ENCODE measurements at regions of chr22 and their contacts with region 1.

Region 1: DNA sequence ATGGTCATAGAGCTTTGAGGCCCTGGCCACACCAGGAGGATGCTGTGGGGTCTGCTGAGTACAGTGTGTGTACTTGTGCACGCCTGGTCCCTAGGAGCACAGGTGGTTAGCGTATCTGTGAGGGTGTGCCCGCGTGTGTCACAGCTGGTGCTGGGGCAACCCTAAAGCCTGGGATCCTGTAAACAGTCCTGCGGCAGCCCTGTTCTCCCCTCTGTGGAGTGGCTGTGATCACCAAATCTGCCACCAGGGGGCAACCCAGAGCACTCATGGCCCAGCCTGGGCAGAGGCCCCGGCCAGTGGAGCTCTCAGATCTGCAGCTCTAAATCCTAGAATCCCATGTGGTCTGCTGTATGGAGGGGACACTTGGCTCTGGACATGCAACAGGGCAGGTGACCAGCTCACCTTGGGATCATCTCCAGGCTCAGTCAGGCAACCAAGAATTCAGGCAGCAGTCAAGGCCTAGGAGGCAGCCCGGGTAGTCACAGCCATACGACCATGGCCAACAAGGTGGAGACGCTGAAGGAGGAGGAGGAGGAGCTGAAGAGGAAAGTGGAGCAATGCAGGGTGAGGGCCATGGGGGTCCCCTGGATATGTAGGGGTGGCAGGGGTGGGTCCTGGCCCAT is 3.9 kb downstream of the SH3BP1 start:
- DNase-seq: no peak
- H3K4me3 ChIP-seq: no peak overlapping the region
- CTCF ChIP-seq: peak; percentile 89

Region 2: DNA sequence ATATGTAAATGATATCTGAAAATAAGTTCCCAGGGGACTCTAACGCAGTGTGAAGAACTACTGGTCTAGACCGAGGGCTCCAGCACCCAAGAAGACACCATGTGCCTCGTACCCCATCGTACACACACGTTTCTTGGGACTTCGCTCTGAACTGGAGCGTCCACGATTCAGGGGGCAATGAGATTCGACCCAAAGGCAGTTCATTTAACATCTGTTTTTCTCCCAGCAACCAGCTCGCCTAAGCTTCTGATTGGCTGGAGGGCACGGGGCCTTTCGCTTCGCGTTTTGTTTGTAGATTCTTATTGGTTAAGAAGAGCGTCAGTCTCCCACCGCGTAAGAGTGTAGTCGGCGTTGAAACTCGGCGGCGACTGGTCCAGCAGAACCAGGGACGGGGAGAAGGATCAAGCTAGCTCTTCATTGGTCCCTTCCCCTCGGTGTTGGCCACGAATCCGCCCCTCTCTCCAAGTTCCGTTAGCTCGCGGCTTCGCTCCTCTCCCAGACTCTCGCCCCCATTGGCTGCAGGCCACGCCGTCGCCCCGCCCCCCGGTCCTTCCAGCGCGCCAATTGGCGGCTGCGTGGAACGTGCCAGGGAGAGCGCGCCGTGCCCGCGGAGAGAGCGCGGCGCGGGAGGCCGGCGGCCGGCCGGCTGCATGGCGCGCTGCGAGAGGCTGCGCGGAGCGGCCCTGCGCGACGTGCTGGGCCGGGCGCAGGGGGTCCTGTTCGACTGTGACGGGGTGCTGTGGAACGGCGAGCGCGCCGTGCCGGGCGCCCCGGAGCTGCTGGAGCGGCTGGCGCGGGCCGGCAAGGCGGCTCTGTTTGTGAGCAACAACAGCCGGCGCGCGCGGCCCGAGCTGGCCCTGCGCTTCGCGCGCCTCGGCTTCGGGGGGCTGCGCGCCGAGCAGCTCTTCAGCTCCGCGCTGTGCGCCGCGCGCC is 15.1 kb after region 1 on chr22 and contains the start of gene PDXP:
- CTCF ChIA-PET with region 1: interaction called, 430 read pairs
- POLR2A ChIA-PET with region 1: interaction called, 10 read pairs
- DNase-seq: peak; percentile 100
- H3K4me3 ChIP-seq: peak within 1 kb of the TSS; percentile 78
- CTCF ChIP-seq: no peak

Region 3: DNA sequence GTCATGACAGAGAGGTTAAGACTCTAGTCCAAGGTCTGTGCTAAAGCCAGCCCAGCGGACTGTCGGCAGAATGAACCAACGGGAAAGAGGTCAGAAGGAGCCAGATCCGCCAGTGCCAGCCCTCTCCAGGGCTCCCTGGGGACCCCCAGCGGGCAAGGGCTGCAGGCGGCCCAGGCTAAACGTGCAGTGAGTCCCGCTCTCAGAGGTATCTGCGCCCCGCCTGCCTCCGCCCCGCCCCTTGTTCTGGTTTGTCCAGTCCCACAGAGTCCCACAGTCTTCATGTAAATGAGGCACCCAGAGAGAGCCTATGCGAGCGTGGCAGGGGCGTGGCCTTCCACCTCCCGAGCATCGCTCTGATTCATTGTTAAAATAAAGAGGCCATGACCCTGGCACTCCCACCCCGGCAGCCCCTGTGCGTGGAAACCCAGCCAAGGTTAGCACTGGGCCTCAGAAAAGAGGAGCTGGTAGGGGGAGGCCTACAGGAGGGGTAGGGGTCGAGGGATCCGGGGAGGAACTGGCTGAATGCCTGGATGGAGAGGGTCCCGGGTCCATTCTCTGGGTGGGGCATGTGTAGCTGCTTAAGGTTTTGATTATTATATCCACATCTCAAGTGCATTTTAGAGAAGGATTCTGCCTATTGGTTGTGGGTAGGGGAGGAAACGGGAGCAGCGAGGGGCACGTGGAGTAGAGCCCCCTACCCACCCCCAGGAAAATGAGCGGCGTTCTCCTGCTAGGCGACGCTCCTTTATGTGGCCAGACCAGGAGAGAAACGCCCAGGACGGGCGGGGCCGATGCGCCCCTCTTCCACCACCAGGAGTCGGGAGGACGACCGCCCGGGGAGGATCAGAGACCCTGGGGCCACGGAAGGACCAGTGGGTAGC is 53.6 kb after region 1 on chr22 and contains the start of gene TRIOBP:
- CTCF ChIA-PET with region 1: interaction called, 69 read pairs
- POLR2A ChIA-PET with region 1: interaction called, 4 read pairs
- DNase-seq: peak; percentile 72
- H3K4me3 ChIP-seq: peak within 1 kb of the TSS; percentile 64
- CTCF ChIP-seq: peak; percentile 63

Region 4: GRCh38 chr22:37777122-37777687 is 133.9 kb after region 1 on chr22:
- CTCF ChIA-PET with region 1: interaction called, 24 read pairs
- POLR2A ChIA-PET with region 1: no interaction called
- DNase-seq: no peak
- H3K4me3 ChIP-seq: no peak overlapping the region
- CTCF ChIP-seq: no peak

Region 5: GRCh38 chr22:37807410-37808293 is 164.3 kb after region 1 on chr22 and contains the start of gene GCAT:
- CTCF ChIA-PET with region 1: interaction called, 20 read pairs
- POLR2A ChIA-PET with region 1: no interaction called
- DNase-seq: peak; percentile 80
- H3K4me3 ChIP-seq: peak within 1 kb of the TSS; percentile 88
- CTCF ChIP-seq: no peak

Region 6: GRCh38 chr22:37849089-37849751 is 205.9 kb after region 1 on chr22 and contains the start of gene EIF3L:
- CTCF ChIA-PET with region 1: no interaction called
- POLR2A ChIA-PET with region 1: no interaction called
- DNase-seq: no peak
- H3K4me3 ChIP-seq: peak within 1 kb of the TSS; percentile 82
- CTCF ChIP-seq: no peak

Measured in AG04449 (cell line).